ENCODE measurements at regions of chr16 and their contacts with region 1.

Region 1: DNA sequence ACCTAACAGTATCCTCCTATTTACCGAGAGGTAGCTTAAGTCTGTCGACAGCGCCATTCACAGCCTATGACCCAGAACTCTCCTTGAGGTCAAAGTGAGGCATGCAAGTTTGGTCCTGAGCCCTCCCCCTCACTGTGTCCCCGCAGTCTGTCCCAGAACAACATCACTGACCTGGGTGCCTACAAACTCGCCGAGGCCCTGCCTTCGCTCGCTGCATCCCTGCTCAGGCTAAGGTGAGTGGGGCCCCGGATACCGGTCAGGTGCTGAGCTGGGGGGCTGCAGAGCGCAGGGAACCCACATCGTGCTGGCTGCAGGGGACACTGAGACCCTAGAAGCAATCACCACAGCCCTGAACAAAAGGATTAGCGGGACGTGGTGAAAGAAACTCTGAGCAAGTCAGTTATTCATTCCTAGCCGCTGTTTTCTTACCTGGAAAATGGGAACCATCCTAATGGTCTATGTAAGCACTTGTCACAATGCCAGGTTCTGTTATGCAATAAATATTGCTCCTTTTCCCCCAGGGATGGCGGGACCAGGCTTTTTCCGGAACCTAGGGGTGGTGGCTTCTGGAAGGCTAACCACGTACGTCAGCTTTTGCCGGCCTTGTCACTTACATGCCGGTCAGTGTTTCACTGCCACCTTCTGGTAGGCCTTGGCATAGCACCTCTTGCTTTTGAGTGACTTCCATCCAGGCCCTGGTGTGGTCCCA is 23.8 kb downstream of the DEXI start:
- DNase-seq: peak; percentile 96
- ATAC-seq: peak; percentile 87
- H3K4me3 Mint-ChIP-seq: no peak overlapping the region
- H3K27ac Mint-ChIP-seq: no peak overlapping the region
- H3K4me1 Mint-ChIP-seq: peaks cover 10% of the 10 kb centered on the region
- H3K27me3 Mint-ChIP-seq: no peaks in the 10 kb centered on the region
- CTCF ChIP-seq: peak; percentile 90

Region 2: DNA sequence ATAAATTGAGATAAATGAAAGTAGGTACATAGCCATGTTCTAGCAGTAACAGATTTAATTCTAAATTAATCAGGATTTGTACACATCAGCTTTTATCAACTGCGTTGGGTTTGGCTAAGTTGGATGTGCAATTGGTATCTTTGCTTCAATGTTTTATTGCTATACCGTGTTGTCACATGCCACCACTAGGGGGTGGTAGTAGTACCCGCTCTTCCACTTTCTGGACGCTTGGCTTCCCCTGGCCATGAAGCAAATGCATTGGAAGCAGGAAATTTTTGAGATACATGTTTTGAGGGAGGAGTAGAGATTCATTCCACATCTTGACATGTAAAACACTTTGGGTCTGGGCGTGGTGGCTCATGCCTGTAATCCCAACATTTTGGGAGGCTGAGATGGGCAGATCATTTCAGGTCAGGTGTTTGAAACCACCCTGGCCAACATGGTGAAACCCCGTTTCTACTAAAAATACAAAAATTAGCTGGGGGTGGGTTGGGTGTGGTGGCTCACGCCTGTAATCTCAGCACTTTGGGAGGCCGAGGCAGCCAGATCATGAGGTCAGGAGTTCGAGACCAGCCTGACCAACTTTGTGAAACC is 396.7 kb before region 1 on chr16:
- CTCF ChIA-PET with region 1: interaction called, 15 read pairs
- POLR2A ChIA-PET with region 1: no interaction called
- intact Hi-C with region 1: loop called (anchors 5 kb)
- DNase-seq: peak; percentile 61
- ATAC-seq: peak; percentile 65
- H3K4me3 Mint-ChIP-seq: no peak overlapping the region
- H3K27ac Mint-ChIP-seq: no peak overlapping the region
- H3K4me1 Mint-ChIP-seq: peaks cover 2% of the 10 kb centered on the region
- H3K27me3 Mint-ChIP-seq: peaks cover 9% of the 10 kb centered on the region
- CTCF ChIP-seq: peak; percentile 71

Region 3: GRCh38 chr16:10737068-10737625 is 181.3 kb before region 1 on chr16:
- CTCF ChIA-PET with region 1: interaction called, 20 read pairs
- POLR2A ChIA-PET with region 1: no interaction called
- intact Hi-C with region 1: loop called (anchors 5 kb)
- DNase-seq: peak; percentile 68
- ATAC-seq: peak; percentile 63
- H3K4me3 Mint-ChIP-seq: peak overlapping the region; percentile 33
- H3K27ac Mint-ChIP-seq: peak overlapping the region; percentile 59
- H3K4me1 Mint-ChIP-seq: peaks cover 32% of the 10 kb centered on the region
- H3K27me3 Mint-ChIP-seq: no peaks in the 10 kb centered on the region
- CTCF ChIP-seq: peak; percentile 93

Region 4: GRCh38 chr16:10776280-10776679 is 142.2 kb before region 1 on chr16:
- CTCF ChIA-PET with region 1: no interaction called
- POLR2A ChIA-PET with region 1: no interaction called
- intact Hi-C with region 1: loop called (anchors 10 kb)
- DNase-seq: peak; percentile 38
- ATAC-seq: peak; percentile 83
- H3K4me3 Mint-ChIP-seq: no peak overlapping the region
- H3K27ac Mint-ChIP-seq: no peak overlapping the region
- H3K4me1 Mint-ChIP-seq: peaks cover 13% of the 10 kb centered on the region
- H3K27me3 Mint-ChIP-seq: no peaks in the 10 kb centered on the region
- CTCF ChIP-seq: no peak

Region 5: DNA sequence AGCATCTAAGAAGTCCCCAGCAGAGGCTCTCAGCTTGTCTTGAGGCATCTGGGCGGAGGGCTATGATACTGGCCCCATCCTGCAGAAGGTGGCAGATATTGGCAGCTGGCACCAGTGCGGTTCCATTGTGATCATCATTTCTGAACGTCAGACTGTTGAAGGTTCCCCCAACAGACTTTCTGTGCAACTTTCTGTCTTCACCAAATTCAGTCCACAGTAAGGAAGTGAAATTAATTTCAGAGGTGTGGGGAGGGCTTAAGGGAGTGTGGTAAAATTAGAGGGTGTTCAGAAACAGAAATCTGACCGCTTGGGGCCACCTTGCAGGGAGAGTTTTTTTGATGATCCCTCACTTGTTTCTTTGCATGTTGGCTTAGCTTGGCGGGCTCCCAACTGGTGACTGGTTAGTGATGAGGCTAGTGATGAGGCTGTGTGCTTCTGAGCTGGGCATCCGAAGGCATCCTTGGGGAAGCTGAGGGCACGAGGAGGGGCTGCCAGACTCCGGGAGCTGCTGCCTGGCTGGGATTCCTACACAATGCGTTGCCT is 41.6 kb before region 1 on chr16 and contains the start of gene CIITA:
- CTCF ChIA-PET with region 1: interaction called, 27 read pairs
- POLR2A ChIA-PET with region 1: interaction called, 4 read pairs
- intact Hi-C with region 1: no loop called
- DNase-seq: peak; percentile 88
- ATAC-seq: peak; percentile 77
- H3K4me3 Mint-ChIP-seq: peak within 1 kb of the TSS; percentile 81
- H3K27ac Mint-ChIP-seq: peak within 1 kb of the TSS; percentile 74
- H3K4me1 Mint-ChIP-seq: peaks cover 64% of the 10 kb centered on the region
- H3K27me3 Mint-ChIP-seq: peaks cover 58% of the 10 kb centered on the region
- CTCF ChIP-seq: no peak
- total RNA-seq, gene CIITA: 4.4 to 5.3 TPM

Region 6: DNA sequence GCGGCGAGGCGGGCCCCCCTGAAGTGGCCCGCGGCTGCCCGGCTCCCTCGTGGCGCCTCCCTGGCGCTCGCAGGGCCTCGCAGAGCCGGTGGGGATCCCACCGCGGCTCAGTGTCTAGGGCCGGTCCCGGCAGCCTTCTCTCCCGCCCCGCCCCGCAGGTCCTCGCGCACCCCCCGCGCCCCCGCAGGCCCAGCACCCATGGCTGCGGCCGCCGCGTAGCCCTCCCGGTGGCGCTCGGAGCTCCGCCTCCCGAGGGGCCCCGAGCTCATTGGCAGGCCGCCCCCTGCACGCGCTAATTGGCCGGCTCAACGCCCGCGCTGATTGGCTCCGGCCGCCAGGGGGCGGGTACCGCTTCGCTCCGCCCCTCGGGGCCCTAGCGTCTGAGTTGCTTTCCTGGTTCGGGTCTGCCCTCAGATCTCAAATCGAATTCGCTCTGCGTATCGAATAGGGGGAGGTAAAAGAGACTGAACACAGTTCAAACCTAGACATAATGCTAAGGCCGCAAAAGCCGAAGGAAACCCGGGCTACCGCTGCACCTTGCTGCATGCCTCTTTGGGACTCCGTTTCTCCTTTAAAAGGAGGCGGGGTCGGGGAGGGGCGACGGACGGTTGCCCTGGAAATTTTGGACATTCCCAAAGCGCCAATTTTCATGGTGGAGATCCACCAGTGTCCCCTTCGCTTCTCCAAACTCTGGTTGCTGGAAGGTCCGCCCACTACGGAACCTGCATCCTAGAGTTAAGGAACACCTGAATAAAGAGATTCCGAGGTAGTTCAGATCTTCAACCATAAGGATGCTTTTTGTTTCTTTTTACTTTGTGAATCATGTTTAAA is 24.0 kb after region 1 on chr16 and contains the start of gene DEXI:
- CTCF ChIA-PET with region 1: interaction called, 40 read pairs
- POLR2A ChIA-PET with region 1: no interaction called
- intact Hi-C with region 1: no loop called
- DNase-seq: peak; percentile 96
- ATAC-seq: peak; percentile 89
- H3K4me3 Mint-ChIP-seq: peak within 1 kb of the TSS; percentile 97
- H3K27ac Mint-ChIP-seq: peak within 1 kb of the TSS; percentile 89
- H3K4me1 Mint-ChIP-seq: peaks cover 69% of the 10 kb centered on the region
- H3K27me3 Mint-ChIP-seq: no peaks in the 10 kb centered on the region
- CTCF ChIP-seq: no peak
- total RNA-seq, gene DEXI: 24.8 to 25.3 TPM

Region 7: GRCh38 chr16:11025120-11025531 is 106.7 kb after region 1 on chr16:
- CTCF ChIA-PET with region 1: no interaction called
- POLR2A ChIA-PET with region 1: no interaction called
- intact Hi-C with region 1: no loop called
- DNase-seq: no peak
- ATAC-seq: peak; percentile 83
- H3K4me3 Mint-ChIP-seq: no peak overlapping the region
- H3K27ac Mint-ChIP-seq: peak overlapping the region; percentile 59
- H3K4me1 Mint-ChIP-seq: peaks cover 12% of the 10 kb centered on the region
- H3K27me3 Mint-ChIP-seq: no peaks in the 10 kb centered on the region
- CTCF ChIP-seq: no peak

Region 8: GRCh38 chr16:11356573-11357331 is 438.3 kb after region 1 on chr16:
- CTCF ChIA-PET with region 1: no interaction called
- POLR2A ChIA-PET with region 1: no interaction called
- intact Hi-C with region 1: no loop called
- DNase-seq: peak; percentile 70
- ATAC-seq: no peak
- H3K4me3 Mint-ChIP-seq: no peak overlapping the region
- H3K27ac Mint-ChIP-seq: no peak overlapping the region
- H3K4me1 Mint-ChIP-seq: peaks cover 62% of the 10 kb centered on the region
- H3K27me3 Mint-ChIP-seq: peaks cover 13% of the 10 kb centered on the region
- CTCF ChIP-seq: peak; percentile 65